ENCODE measurements at regions of chr16 and their contacts with region 1.

Region 1: GRCh38 chr16:80580109-80580832 is 39.5 kb downstream of the DYNLRB2 start:
- DNase-seq: peak; percentile 28 to 89 (median 52)
- ATAC-seq: peak; percentile 84
- H3K4me3 ChIP-seq: no peak overlapping the region
- H3K4me3 Mint-ChIP-seq: peak overlapping the region; percentile 59
- H3K27ac ChIP-seq: peak overlapping the region; percentile 23 to 73
- H3K27ac Mint-ChIP-seq: peak overlapping the region; percentile 87
- H3K4me1 ChIP-seq: peaks cover 40% of the 10 kb centered on the region
- H3K4me1 Mint-ChIP-seq: peaks cover 24% of the 10 kb centered on the region
- H3K27me3 ChIP-seq: no peaks in the 10 kb centered on the region
- H3K27me3 Mint-ChIP-seq: no peaks in the 10 kb centered on the region
- CTCF ChIP-seq: no peak

Region 2: GRCh38 chr16:80564394-80564793 is 15.9 kb before region 1 on chr16:
- CTCF ChIA-PET with region 1: interaction called, 6 read pairs
- POLR2A ChIA-PET with region 1: interaction called, 10 read pairs
- intact Hi-C with region 1: no loop called
- DNase-seq: peak in 2 of 9 experiments; percentile 21 to 50
- ATAC-seq: peak; percentile 46
- H3K4me3 ChIP-seq: peak overlapping the region in 1 of 2 experiments; percentile 1
- H3K4me3 Mint-ChIP-seq: peak overlapping the region; percentile 38
- H3K27ac ChIP-seq: peak overlapping the region in 1 of 2 experiments; percentile 38
- H3K27ac Mint-ChIP-seq: peak overlapping the region; percentile 81
- H3K4me1 ChIP-seq: peaks cover 19% of the 10 kb centered on the region
- H3K4me1 Mint-ChIP-seq: peaks cover 25% of the 10 kb centered on the region
- H3K27me3 ChIP-seq: no peaks in the 10 kb centered on the region
- H3K27me3 Mint-ChIP-seq: no peaks in the 10 kb centered on the region
- CTCF ChIP-seq: no peak

Region 3: DNA sequence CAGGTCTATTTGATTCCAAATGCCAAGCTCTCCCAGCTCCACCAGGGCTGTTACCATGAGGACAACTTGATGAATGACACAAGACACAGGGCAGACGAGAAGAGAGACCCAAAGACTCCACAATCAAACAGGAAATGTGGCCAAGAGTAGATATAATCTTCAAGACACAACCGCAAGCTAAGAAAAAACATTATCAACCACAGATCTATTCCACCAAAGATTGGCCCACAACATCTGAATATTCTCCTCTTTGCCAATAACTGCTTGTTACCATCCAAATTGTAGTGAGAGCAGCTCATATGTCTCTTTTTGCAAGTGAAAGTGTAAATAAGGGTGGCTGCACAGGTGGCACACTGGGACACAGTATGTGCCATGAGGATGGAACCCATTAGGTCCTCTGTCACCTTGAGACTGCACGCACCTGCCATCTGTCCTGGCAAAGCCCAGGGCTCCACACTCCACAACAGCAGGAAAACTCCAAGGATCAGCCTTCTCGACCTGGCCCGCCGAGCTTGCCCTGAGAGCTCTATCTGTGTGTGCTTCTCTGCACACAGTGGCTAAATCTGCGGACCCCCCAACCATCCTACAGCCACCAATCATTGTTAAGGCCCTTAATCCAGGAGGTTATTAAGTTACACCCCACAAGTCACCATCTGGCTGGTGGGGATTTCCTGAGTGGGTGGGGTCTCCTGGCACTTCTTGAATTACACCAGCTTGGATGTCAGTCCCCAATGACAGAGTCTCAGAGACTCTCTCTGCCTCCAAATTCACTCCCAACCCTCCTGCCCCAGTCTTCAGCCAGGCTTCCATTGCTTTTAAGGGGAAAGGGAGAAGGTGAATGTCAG is 11.0 kb after region 1 on chr16:
- CTCF ChIA-PET with region 1: interaction called, 3 read pairs
- POLR2A ChIA-PET with region 1: interaction called, 15 read pairs
- intact Hi-C with region 1: loop called in 1 of 2 experiments (anchors 1 kb)
- DNase-seq: peak in 6 of 9 experiments; percentile 19 to 81 (median 49)
- ATAC-seq: peak; percentile 84
- H3K4me3 ChIP-seq: peak overlapping the region; percentile 7 to 23
- H3K4me3 Mint-ChIP-seq: peak overlapping the region; percentile 31
- H3K27ac ChIP-seq: no peak overlapping the region
- H3K27ac Mint-ChIP-seq: peak overlapping the region; percentile 19
- H3K4me1 ChIP-seq: peaks cover 14% of the 10 kb centered on the region
- H3K4me1 Mint-ChIP-seq: peaks cover 24% of the 10 kb centered on the region
- H3K27me3 ChIP-seq: no peaks in the 10 kb centered on the region
- H3K27me3 Mint-ChIP-seq: peaks cover 3% of the 10 kb centered on the region
- CTCF ChIP-seq: no peak

Measured in CD8-positive, alpha-beta T cell (primary cell).